ENCODE measurements at regions of chr3 and their contacts with region 1.

Region 1: DNA sequence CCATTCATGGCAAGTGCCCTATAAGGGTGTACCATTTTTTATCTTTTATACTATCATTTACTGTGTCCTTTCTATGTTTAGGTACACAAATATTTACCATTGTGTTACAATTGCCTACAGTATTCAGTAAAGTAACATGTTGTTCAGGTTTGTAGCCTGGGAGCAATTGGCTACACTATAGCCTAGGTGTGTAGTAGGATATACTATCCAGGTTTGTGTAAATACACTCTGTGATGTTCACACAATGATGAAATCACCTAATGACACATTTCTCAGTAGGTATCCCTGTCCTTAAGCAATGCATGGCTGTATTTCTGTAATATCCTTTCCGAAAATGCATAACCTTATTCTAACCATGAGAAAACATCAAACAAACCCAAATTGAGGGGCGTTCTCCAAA is 17.9 kb upstream of the CNOT10 start:
- DNase-seq: no peak
- H3K4me3 ChIP-seq: no peak overlapping the region
- CTCF ChIP-seq: no peak
- POLR2A ChIP-seq: no peak

Region 2: DNA sequence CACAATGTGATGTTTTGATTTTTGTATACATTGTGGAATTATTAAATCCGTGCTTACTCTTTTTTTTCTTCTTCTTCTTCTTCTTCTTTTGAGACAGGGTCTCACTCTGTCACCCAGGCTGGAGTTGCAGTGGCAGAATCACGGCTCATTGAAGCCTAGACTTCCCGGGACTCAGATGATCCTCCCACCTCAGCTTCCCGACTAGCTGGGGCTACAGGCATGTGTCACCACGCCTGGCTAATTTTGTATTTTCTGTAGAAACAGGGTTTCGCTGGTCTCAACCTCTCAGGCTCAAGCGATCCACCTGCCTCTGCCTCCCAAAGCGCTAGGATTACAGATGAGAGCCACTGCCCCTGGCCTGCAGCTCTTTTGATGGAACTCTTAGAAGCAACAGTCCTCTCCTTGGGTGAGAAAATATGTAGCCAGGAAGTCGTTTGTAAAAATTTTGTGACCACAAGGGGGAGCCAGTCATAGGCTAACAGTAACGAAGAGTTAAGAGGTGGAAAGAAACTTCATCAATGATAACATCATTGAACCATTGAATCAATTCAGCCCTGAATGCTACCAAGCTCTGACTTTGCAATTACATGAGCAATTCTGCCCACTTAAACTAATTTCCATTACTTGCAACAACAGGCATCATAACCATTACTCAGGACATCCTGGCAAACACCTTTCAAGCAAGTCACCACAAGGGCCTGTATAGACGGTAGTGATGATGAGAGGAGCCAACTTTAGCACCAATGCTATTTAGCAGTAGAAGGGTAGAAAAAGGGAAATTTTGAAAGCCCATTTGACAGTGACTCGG is 292.1 kb before region 1 on chr3:
- intact Hi-C with region 1: loop called (anchors 5 kb)
- DNase-seq: peak in 1 of 2 donors; percentile 77
- H3K4me3 ChIP-seq: no peak overlapping the region
- CTCF ChIP-seq: no peak
- POLR2A ChIP-seq: no peak

Region 3: GRCh38 chr3:32510075-32510724 is 156.9 kb before region 1 on chr3:
- intact Hi-C with region 1: loop called (anchors 5 kb)
- DNase-seq: peak; percentile 69 to 89
- H3K4me3 ChIP-seq: no peak overlapping the region
- CTCF ChIP-seq: no peak
- POLR2A ChIP-seq: no peak